ENCODE measurements at regions of chr16 and their contacts with region 1.

Region 1: DNA sequence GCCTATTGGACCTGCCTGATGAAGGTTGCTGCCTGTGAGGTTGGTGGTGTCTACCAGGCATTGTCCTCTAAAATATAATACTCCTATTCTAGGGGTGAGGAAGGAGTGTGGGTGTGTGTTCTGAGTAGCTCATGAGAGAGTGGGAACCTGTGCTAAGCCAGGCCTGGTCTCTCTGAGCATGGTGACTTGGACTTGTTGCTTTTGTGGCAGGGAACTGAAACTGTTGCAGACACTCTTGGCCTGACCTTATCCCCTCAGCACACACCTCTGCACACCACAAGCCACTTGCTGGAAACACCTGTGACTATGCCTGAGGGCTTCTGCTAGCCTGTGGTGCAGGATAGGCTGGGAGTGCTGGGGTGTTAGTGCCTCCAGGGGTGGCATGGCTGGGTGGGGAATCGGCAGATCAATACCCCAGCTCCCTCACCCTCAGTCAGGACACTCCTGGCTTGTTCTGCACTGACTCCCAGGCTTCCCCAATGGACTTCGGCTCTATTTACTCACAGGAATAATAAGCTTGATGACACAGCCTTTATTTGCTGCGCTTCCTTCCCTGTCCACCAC is 29.9 kb downstream of the PLCG2 start:
- DNase-seq: peak; percentile 73
- CTCF ChIP-seq: no peak

Region 2: GRCh38 chr16:81786321-81786720 is 22.7 kb before region 1 on chr16:
- CTCF ChIA-PET with region 1: interaction called, 10 read pairs
- POLR2A ChIA-PET with region 1: interaction called, 6 read pairs
- DNase-seq: no peak
- CTCF ChIP-seq: no peak